ENCODE measurements at regions of chr6 and their contacts with region 1.

Region 1: GRCh38 chr6:27753668-27754407 is 158.4 kb downstream of the OR2B2 start:
- DNase-seq: peak; percentile 83
- ATAC-seq: peak; percentile 76
- H3K4me3 ChIP-seq: peak overlapping the region; percentile 63 to 88 (median 78)
- H3K27ac ChIP-seq: no peak overlapping the region
- H3K4me1 ChIP-seq: peaks cover 21% of the 10 kb centered on the region
- H3K27me3 ChIP-seq: peaks cover 0 to 3% of the 10 kb centered on the region in 2 experiments; a peak in 1 of 5 replicates
- CTCF ChIP-seq: no peak
- EP300 ChIP-seq: no peak
- POLR2A ChIP-seq: no peak
- RAD21 ChIP-seq: no peak

Region 2: GRCh38 chr6:27059621-27060425 is 694.0 kb before region 1 on chr6:
- CTCF ChIA-PET with region 1: no interaction called
- POLR2A ChIA-PET with region 1: no interaction called
- in situ Hi-C with region 1: no loop called
- intact Hi-C with region 1: no loop called
- DNase-seq: peak; percentile 42
- ATAC-seq: peak; percentile 62
- H3K4me3 ChIP-seq: no peak overlapping the region
- H3K27ac ChIP-seq: no peak overlapping the region
- H3K4me1 ChIP-seq: peaks cover 26% of the 10 kb centered on the region
- H3K27me3 ChIP-seq: no peaks in the 10 kb centered on the region
- CTCF ChIP-seq: no peak
- EP300 ChIP-seq: no peak
- POLR2A ChIP-seq: no peak
- RAD21 ChIP-seq: no peak

Region 3: DNA sequence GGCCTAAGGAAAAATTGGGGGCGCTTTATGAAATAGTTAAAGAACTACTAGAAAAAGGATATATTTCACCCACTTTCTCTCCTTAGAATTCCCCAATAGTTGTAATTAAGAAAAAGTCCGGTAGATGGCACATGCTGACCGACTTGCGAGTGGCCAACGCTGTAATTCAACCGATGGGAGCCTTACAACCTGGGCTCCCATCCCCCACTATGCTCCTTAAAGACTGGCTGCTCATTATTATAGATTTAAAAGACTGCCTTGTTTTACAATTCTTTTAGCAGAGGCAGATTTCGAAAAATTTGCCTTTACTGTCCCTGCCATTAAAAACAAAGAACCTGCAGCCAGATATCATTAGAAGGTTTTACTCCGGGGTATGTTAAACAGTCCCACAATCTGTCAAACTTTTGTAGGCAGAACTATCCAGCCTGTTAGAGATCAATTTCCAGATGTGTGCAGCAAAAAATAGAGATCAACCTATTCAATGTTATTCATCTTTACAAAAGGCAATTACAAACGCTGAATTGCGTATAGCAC is 564.9 kb before region 1 on chr6:
- CTCF ChIA-PET with region 1: interaction called, 6 read pairs
- POLR2A ChIA-PET with region 1: no interaction called
- in situ Hi-C with region 1: no loop called
- intact Hi-C with region 1: loop called (anchors 1 kb)
- DNase-seq: peak; percentile 66
- ATAC-seq: peak; percentile 88
- H3K4me3 ChIP-seq: peak overlapping the region; percentile 53 to 76 (median 75)
- H3K27ac ChIP-seq: no peak overlapping the region
- H3K4me1 ChIP-seq: peaks cover 16% of the 10 kb centered on the region
- H3K27me3 ChIP-seq: peaks cover 0 to 26% of the 10 kb centered on the region in 2 experiments; a peak in 3 of 5 replicates
- CTCF ChIP-seq: peak; percentile 79
- EP300 ChIP-seq: no peak
- POLR2A ChIP-seq: no peak
- RAD21 ChIP-seq: peak; percentile 82

Region 4: GRCh38 chr6:27312146-27312949 is 441.5 kb before region 1 on chr6 and contains the start of gene POM121L2:
- CTCF ChIA-PET with region 1: no interaction called
- POLR2A ChIA-PET with region 1: no interaction called
- in situ Hi-C with region 1: no loop called
- intact Hi-C with region 1: loop called (anchors 1 kb)
- DNase-seq: peak; percentile 71
- ATAC-seq: peak; percentile 87
- H3K4me3 ChIP-seq: peak within 1 kb of the TSS; percentile 34 to 70 (median 60); a peak in 5 of 6 replicates
- H3K27ac ChIP-seq: no peak within 1 kb of the TSS
- H3K4me1 ChIP-seq: peaks cover 12% of the 10 kb centered on the region
- H3K27me3 ChIP-seq: peaks cover 2 to 22% of the 10 kb centered on the region in 2 experiments; a peak in 2 of 5 replicates
- CTCF ChIP-seq: peak; percentile 97
- EP300 ChIP-seq: no peak
- POLR2A ChIP-seq: no peak
- RAD21 ChIP-seq: peak; percentile 89
- total RNA-seq, gene POM121L2: not detected in 2 replicates

Region 5: GRCh38 chr6:27479319-27480182 is 274.3 kb before region 1 on chr6:
- CTCF ChIA-PET with region 1: no interaction called
- POLR2A ChIA-PET with region 1: no interaction called
- in situ Hi-C with region 1: no loop called
- intact Hi-C with region 1: loop called (anchors 1 kb)
- DNase-seq: peak; percentile 85
- ATAC-seq: peak; percentile 82
- H3K4me3 ChIP-seq: peak overlapping the region; percentile 80 to 87 (median 81)
- H3K27ac ChIP-seq: peak overlapping the region; percentile 74
- H3K4me1 ChIP-seq: peaks cover 26% of the 10 kb centered on the region
- H3K27me3 ChIP-seq: no peaks in the 10 kb centered on the region; a peak in 1 of 5 replicates
- CTCF ChIP-seq: no peak
- EP300 ChIP-seq: peak in 1 of 2 experiments; percentile 32; a peak in 1 of 4 replicates
- POLR2A ChIP-seq: no peak; a peak in 2 of 4 replicates
- RAD21 ChIP-seq: peak; percentile 16; the same call in 1 of the 2 replicates

Region 6: DNA sequence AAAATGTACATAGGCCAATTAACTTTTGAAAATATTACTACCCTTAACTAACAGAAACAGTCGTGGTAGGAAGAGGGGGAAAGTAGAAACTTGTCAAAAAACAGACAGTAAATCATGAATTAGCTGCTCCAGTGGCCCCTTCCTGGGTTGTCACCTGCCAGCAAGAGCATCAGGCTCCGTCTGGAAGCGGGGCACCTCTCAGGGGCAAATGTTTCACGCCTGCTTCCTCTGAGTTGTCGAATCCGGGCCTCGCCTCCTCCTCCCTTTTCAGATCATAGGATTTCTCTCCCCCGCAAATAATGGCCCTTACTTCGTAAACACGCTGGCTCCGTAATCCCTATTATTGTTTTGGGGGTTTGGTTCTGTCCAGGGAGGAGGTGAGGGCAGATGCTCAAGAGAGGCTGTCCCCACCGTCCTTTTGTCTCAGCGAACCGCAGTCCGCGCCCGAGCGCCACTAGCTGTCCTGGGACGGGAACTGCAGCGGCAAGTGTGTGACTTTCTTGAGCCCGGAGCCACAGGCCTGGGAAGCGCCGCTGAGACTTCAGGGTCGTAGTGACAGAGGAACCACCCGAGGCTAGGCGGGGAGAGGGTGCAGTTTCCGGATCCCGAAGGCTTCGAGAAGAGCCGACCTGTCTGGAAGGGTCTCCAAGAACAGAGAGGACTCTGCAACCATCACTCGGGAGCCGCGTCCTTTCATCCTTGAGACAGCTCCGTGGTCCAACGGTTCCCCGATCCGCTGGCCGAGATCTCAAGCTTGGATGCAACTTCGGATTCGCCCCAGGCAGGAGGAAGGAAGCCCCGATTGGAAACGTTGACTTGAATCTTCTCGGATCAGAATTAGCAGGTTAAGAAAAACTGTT is 66.5 kb before region 1 on chr6:
- CTCF ChIA-PET with region 1: no interaction called
- POLR2A ChIA-PET with region 1: no interaction called
- in situ Hi-C with region 1: no loop called
- intact Hi-C with region 1: loop called (anchors 1 kb)
- DNase-seq: peak; percentile 79
- ATAC-seq: peak; percentile 85
- H3K4me3 ChIP-seq: peak overlapping the region; percentile 65 to 93 (median 78)
- H3K27ac ChIP-seq: peak overlapping the region; percentile 15
- H3K4me1 ChIP-seq: peaks cover 56% of the 10 kb centered on the region
- H3K27me3 ChIP-seq: no peaks in the 10 kb centered on the region; a peak in 1 of 5 replicates
- CTCF ChIP-seq: peak; percentile 95
- EP300 ChIP-seq: no peak
- POLR2A ChIP-seq: no peak
- RAD21 ChIP-seq: peak; percentile 70

Region 7: DNA sequence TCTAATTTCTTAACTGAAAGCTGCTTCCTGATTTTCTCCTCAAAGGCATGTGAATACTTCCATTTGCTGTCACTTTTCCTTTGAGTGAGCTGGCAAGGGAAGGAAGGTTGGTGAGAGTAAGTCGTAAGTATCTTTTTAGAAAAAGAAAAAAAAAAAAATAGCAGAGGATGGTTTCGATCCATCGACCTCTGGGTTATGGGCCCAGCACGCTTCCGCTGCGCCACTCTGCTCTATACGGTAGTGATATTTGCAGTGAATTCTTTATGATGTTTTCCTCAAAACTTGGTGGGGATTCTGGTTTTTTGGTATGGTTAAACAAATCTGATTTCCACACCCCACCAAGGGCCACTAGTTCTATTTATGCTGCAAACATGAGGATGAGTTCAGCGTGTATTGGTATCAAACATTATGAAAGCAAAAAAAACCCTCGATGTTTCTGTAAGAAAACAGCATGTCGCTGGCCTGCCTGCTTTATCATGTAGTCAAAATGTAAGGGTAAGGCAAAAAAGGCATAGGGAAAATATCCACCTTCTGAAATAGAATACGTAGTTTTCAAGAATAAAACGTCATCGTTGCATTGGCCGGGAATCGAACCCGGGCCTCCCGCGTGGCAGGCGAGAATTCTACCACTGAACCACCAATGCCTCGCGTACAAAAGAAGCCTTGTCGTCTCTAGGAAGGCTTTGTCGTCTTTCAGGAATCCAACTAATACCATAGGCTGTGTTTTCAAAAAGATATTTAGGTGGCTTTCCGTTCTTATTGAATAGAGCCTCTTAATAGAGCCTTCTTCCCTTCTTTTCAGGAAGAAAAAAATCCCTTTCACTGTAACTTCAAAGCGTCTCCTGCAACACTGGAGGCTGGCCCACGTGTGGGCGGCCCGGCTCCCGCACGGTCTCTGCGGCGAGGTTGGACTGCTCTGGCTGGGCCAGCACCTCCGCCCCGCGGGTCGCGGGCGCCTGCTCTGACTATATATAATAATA is 148.8 kb after region 1 on chr6:
- CTCF ChIA-PET with region 1: no interaction called
- POLR2A ChIA-PET with region 1: no interaction called
- in situ Hi-C with region 1: no loop called
- intact Hi-C with region 1: loop called (anchors 1 kb)
- DNase-seq: peak; percentile 85
- ATAC-seq: peak; percentile 95
- H3K4me3 ChIP-seq: peak overlapping the region; percentile 60 to 79 (median 69)
- H3K27ac ChIP-seq: peak overlapping the region; percentile 57
- H3K4me1 ChIP-seq: peaks cover 25% of the 10 kb centered on the region
- H3K27me3 ChIP-seq: no peaks in the 10 kb centered on the region
- CTCF ChIP-seq: no peak
- EP300 ChIP-seq: no peak
- POLR2A ChIP-seq: no peak
- RAD21 ChIP-seq: peak; percentile 49; the same call in 1 of the 2 replicates